GM10248 (cell line): ENCODE measurements at regions of chr11 and their contacts with region 1.

Region 1: DNA sequence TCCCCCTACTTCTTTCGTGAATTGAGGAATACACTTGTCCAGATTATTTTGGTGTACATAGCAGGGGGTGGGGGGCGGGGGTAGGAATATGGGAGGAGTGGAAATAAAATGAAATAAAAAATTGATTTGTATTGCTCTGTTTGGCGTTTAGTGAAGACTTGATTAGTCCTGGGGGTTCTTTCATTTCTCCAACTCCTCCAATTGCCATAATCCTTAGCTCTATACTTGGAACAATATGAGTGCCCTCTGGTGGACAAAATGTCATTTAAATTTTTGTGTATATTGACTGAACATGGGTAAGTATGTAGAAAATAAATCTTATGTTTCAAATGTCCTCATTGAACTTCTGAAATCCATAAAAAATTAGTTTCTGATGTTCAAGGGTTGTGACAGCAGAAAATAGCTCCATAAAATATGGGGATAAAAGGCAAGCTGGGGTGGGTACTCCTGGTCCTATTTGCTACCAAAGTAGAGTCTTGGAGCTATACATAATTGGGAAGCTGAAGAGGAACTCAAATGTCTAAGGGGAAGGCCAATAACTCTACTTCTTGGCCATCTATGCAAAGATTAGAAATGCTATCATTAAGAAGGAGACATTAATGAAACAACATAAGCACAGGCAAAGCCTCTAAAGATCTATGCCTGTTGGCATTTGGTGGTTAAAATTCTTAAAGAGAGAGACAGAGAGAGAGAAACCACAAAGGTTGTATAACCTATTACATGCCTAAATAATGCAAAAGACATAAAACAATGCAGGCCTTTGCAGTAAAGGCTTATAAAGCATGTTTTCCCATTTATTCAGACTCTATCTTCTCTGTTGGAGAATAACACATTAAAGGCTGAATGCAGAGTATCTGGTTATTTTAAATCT is 421.6 kb downstream of the METTL15 start:
- DNase-seq: peak; percentile 13
- CTCF ChIP-seq: no peak

Region 2: DNA sequence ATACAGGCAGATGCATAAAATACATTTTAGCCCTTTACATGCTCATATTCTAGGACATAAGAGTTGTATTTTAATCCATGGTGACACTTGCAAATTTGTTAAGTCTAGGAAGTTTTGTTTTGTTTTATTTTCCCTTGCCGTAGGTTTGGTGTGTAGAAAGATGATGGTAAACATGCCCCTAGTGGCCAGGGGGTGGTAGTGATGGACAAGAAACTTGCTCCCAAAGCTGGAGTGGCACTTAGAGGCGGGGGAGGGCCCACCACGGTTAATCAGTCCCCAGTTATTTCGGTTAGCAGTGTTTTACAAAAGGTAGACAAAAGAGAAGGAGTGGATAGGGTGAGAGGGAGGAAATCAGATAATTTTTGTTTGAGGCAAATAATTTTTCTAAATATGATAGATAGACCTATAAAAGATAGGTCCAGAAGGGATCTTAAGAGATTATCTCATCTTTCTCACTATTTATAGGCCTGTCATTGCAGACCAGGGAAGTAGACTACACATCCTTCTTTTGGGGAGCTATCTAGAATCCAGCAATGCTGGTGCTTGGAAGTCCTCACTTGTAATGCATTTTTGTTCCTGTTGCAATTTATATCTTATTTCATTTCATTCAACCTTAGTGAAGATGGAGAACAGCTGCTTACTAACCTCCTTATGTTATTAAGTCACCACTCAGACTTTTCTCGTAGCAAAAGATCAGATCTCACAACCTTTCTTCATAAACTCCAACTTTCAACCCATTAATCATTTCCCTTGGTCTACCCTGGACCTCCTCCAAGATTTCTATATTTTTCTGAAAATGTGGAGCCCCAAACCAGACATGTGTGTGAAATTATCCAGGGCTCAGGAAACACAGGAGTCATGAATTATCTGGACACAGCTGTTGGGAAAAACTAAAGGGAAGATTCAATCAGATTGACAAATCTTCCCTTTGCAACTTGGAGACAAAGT is 823.6 kb before region 1 on chr11:
- CTCF ChIA-PET with region 1: interaction called, 112 read pairs
- POLR2A ChIA-PET with region 1: no interaction called
- DNase-seq: peak; percentile 33
- CTCF ChIP-seq: peak; percentile 48

Region 3: GRCh38 chr11:27839226-27839870 is 690.4 kb before region 1 on chr11:
- CTCF ChIA-PET with region 1: interaction called, 10 read pairs
- POLR2A ChIA-PET with region 1: no interaction called
- DNase-seq: no peak
- CTCF ChIP-seq: no peak

Region 4: DNA sequence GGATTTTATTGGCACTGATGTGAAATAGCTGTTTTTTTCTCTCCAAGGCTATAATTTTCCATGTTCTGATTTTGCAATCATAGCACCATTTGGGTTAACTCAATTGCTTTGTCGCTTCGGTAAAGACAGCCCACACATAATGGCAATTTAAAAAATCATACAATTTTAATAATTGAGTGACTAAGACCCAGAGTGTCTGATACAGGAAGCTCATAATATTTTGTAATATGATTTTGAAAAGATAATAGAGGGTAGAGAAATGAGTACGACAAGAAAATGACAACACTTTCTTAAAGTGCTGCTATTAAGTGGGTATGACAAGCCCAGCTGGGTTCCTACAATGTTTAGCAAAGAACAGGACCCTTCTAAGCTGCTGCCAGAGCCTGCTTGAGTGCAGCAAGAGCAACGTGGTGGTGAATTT is 17.6 kb after region 1 on chr11:
- CTCF ChIA-PET with region 1: interaction called, 11 read pairs
- POLR2A ChIA-PET with region 1: no interaction called
- DNase-seq: no peak
- CTCF ChIP-seq: no peak

Region 5: GRCh38 chr11:28621753-28622152 is 92.0 kb after region 1 on chr11:
- CTCF ChIA-PET with region 1: no interaction called
- POLR2A ChIA-PET with region 1: no interaction called
- DNase-seq: no peak
- CTCF ChIP-seq: no peak

Region 6: DNA sequence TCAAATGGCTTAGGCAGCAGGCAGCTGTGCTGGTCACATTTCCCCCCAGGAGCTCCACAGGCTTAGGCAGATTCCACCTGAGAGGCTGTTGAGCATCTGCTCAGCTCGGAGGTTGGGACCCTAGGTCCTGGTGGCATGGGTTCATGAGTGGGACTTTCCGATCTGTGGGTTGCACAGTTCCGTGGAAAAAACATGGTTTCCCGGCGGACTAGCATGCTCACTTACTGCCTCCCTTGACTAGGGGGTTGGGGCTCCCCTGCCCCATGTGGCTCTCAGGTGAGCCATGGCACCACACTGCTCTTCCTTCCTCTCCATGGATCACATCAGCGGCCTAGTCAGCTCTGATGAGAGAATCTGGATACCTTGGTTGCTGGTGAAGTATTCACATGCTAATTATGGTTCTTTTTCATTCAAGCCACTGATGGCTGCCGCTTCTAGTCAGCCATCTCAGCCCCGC is 263.5 kb after region 1 on chr11:
- CTCF ChIA-PET with region 1: no interaction called
- POLR2A ChIA-PET with region 1: no interaction called
- DNase-seq: no peak
- CTCF ChIP-seq: no peak